ENCODE measurements at regions of chr2 and their contacts with region 1.

Region 1: GRCh38 chr2:100416935-100417710 is at the start of gene CHST10:
- DNase-seq: peak; percentile 85
- ATAC-seq: peak; percentile 95
- total RNA-seq, gene CHST10: 10.5 TPM

Region 2: DNA sequence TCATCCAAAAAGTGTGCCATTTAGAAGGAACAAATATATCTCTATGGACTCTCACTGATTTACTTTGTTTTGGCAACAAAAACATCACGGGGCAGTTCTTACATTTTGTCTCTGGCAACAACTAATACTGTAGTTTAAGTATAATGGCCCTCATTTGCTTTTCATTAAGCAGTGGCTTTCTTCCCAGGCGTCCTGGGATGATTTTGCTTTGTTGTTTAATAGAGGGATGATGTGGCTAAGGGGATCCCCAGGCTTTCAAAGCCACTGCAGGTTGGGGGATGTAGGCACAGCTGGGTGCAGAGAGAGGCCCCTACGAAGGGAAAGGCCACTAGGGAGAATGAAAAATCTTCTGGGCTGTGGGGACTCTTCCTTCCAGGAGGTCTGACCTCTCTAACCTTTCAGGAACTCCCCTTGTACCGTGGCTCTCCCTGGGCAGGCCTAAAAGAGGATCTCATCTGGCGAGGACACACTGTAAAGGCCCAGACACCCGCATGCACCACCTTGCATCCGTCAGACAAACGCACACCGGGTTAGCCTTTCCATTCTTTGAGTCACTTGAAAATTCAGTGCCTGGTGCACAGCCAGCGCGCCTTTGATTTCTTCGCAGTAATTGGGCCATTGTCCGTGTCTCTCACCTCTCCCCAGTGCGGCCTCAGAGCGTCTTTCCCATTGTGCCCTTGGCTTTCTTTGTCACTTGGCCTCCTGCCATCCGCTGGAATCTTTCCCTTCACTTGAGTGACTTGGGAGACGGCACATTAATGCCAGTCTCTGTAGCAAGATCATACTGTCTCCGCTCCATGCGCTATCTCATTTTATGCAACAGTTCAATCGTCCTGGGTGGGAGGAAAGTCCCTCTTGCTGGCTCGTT is 234.4 kb before region 1 on chr2:
- intact Hi-C with region 1: no loop called
- DNase-seq: peak; percentile 68
- ATAC-seq: peak; percentile 70

Region 3: GRCh38 chr2:100317634-100318033 is 99.5 kb before region 1 on chr2:
- intact Hi-C with region 1: no loop called
- DNase-seq: no peak
- ATAC-seq: no peak

Region 4: GRCh38 chr2:100562732-100563720 is 145.9 kb after region 1 on chr2 and contains the start of gene PDCL3:
- intact Hi-C with region 1: loop called (anchors 5 kb)
- DNase-seq: peak; percentile 98
- ATAC-seq: peak; percentile 98
- total RNA-seq, gene PDCL3: 29.2 TPM